Sigmoid colon (tissue), 7 donors: ENCODE measurements at regions of chr11 and their contacts with region 1.

Region 1: DNA sequence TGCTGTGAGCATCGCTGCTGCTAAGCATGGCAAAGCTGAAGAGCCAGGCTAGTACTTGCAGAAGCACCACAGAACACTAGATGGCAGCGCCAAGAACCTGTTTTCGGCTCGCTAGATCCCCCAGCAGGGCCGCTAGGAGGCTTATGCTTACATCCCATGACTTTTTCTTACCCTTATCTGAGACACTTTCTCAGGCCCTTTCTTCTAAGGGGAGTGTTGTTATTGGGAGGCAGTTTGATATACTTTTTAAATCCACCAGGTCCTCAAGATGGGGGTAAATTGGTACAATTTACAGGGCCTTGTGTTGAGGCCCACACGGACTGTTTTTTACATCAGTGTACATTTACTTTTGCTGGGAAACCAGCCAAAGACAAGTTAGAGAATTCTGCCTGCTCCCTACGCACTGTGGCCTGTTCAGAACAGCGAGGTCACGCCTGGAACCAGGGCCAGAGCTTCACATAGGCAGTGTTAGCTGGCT is 4.0 kb downstream of the TRIM6 start:
- DNase-seq: peak; percentile 87
- H3K4me3 ChIP-seq: no peak overlapping the region
- H3K27ac ChIP-seq: peak overlapping the region; percentile 65 to 81 (median 77)
- H3K4me1 ChIP-seq: peaks cover 0 to 40% (median 35%) of the 10 kb centered on the region in 4 donors
- H3K27me3 ChIP-seq: no peaks in the 10 kb centered on the region
- CTCF ChIP-seq: peak; percentile 64 to 83 (median 82)
- EP300 ChIP-seq: no peak
- POLR2A ChIP-seq: no peak

Region 2: GRCh38 chr11:5620646-5621521 is 20.5 kb after region 1 on chr11:
- intact Hi-C with region 1: loop called (anchors 1 kb)
- DNase-seq: no peak
- H3K4me3 ChIP-seq: no peak overlapping the region
- H3K27ac ChIP-seq: peak overlapping the region; percentile 33 to 73 (median 68)
- H3K4me1 ChIP-seq: peaks cover 0 to 32% (median 26%) of the 10 kb centered on the region in 4 donors
- H3K27me3 ChIP-seq: no peaks in the 10 kb centered on the region
- CTCF ChIP-seq: no peak
- EP300 ChIP-seq: peak in 1 of 4 donors; percentile 27
- POLR2A ChIP-seq: no peak

Region 3: GRCh38 chr11:5643585-5643984 is 43.2 kb after region 1 on chr11:
- intact Hi-C with region 1: no loop called
- DNase-seq: no peak
- H3K4me3 ChIP-seq: no peak overlapping the region
- H3K27ac ChIP-seq: no peak overlapping the region
- H3K4me1 ChIP-seq: no peaks in the 10 kb centered on the region
- H3K27me3 ChIP-seq: no peaks in the 10 kb centered on the region
- CTCF ChIP-seq: no peak
- EP300 ChIP-seq: no peak
- POLR2A ChIP-seq: no peak

Region 4: DNA sequence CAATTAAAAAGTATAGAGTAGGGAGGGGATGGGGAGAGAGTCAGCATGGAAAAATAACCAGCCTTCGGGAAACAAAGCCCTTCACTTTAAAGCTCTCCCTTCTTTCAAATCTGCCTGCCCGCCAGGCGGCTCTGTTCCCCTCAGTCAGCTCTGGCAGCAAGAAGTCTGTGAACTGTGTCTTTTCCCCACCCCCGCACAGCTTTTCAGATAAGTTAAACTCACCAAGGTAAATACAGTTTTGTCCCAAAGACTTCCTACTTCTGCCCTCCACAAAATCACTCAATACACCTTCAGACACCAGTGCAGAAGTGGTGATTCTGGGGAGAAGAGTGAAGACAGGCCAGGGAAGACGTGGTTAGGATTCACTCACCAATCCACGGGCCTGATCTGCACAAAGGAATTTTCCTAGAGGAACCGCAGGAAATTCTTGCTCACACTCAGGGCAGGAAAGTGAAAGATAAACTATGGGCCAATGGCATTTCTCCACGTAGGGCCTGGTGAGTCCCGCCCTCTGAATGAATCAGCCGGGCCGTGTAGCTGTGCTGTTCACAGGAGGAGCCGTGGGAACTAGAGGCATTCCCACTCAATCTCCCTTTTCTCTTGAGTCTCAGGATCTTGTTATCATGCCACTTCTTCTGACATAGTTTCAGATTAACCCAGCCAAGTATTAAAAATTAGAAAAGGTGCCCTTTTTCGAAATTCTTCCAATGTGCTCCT is 84.4 kb after region 1 on chr11 and contains the start of gene TRIM5:
- intact Hi-C with region 1: loop called (anchors 2 kb)
- DNase-seq: peak; percentile 95
- H3K4me3 ChIP-seq: peak within 1 kb of the TSS; percentile 24 to 53 (median 49)
- H3K27ac ChIP-seq: peak within 1 kb of the TSS; percentile 89 to 93 (median 90)
- H3K4me1 ChIP-seq: peaks cover 0 to 35% (median 26%) of the 10 kb centered on the region in 4 donors
- H3K27me3 ChIP-seq: no peaks in the 10 kb centered on the region
- CTCF ChIP-seq: peak; percentile 20 to 56 (median 50)
- EP300 ChIP-seq: no peak
- POLR2A ChIP-seq: peak in 1 of 2 donors; percentile 31
- total RNA-seq, gene TRIM5: 11.7 to 29.9 (median 14.3) TPM